ENCODE measurements at regions of chr3 and their contacts with region 1.

Region 1: GRCh38 chr3:21752749-21753347 is 1.8 kb upstream of the ZNF385D start:
- DNase-seq: peak; percentile 77
- ATAC-seq: peak; percentile 29
- H3K4me3 ChIP-seq: no peak overlapping the region; the same call in 1 of the 2 replicates
- H3K27ac ChIP-seq: peak overlapping the region; percentile 65; the same call in 1 of the 2 replicates
- H3K4me1 ChIP-seq: peaks cover 33% of the 10 kb centered on the region
- H3K27me3 ChIP-seq: no peaks in the 10 kb centered on the region
- CTCF ChIP-seq: peak; percentile 90

Region 2: GRCh38 chr3:21158861-21159542 is 593.8 kb before region 1 on chr3:
- CTCF ChIA-PET with region 1: no interaction called
- POLR2A ChIA-PET with region 1: no interaction called
- intact Hi-C with region 1: loop called (anchors 10 kb)
- DNase-seq: peak; percentile 8
- ATAC-seq: 0 out of 2 replicates have a peak, but pooled peaks have one; percentile 38
- H3K4me3 ChIP-seq: no peak overlapping the region
- H3K27ac ChIP-seq: no peak overlapping the region
- H3K4me1 ChIP-seq: no peaks in the 10 kb centered on the region
- H3K27me3 ChIP-seq: no peaks in the 10 kb centered on the region
- CTCF ChIP-seq: no peak

Region 3: GRCh38 chr3:21484057-21484827 is 268.6 kb before region 1 on chr3:
- CTCF ChIA-PET with region 1: interaction called, 9 read pairs
- POLR2A ChIA-PET with region 1: no interaction called
- intact Hi-C with region 1: loop called (anchors 2 kb)
- DNase-seq: peak; percentile 81
- ATAC-seq: peak; percentile 83
- H3K4me3 ChIP-seq: no peak overlapping the region
- H3K27ac ChIP-seq: no peak overlapping the region
- H3K4me1 ChIP-seq: peaks cover 9% of the 10 kb centered on the region
- H3K27me3 ChIP-seq: no peaks in the 10 kb centered on the region
- CTCF ChIP-seq: peak; percentile 86

Region 4: DNA sequence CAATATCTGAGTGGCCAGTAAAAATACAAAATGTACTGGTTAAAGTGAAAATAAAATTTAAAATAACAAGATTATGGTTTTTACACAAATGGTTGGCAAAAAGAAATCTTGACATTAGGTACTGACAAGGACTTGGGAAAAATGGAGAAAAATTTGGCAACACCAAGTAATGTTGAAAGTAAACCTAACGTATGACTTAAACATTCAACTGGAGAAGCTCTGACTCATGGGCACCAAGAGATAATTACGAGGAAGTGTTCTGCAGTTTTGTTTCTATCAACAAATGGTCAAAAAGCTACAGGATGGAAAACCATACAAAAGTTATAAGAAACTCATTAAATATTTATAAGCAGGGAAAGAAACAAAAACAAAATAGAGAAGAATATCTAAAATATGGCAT is 179.6 kb before region 1 on chr3:
- CTCF ChIA-PET with region 1: no interaction called
- POLR2A ChIA-PET with region 1: no interaction called
- intact Hi-C with region 1: loop called (anchors 2 kb)
- DNase-seq: peak; percentile 18
- ATAC-seq: no peak
- H3K4me3 ChIP-seq: no peak overlapping the region
- H3K27ac ChIP-seq: no peak overlapping the region
- H3K4me1 ChIP-seq: peaks cover 15% of the 10 kb centered on the region; the same call in 1 of the 2 replicates
- H3K27me3 ChIP-seq: no peaks in the 10 kb centered on the region
- CTCF ChIP-seq: no peak

Region 5: GRCh38 chr3:21672303-21672702 is 80.5 kb before region 1 on chr3:
- CTCF ChIA-PET with region 1: interaction called, 8 read pairs
- POLR2A ChIA-PET with region 1: interaction called, 8 read pairs
- intact Hi-C with region 1: loop called (anchors 1 kb)
- DNase-seq: peak; percentile 94
- ATAC-seq: peak; percentile 83
- H3K4me3 ChIP-seq: peak overlapping the region; percentile 29; the same call in 1 of the 2 replicates
- H3K27ac ChIP-seq: peak overlapping the region; percentile 98
- H3K4me1 ChIP-seq: peaks cover 59% of the 10 kb centered on the region
- H3K27me3 ChIP-seq: no peaks in the 10 kb centered on the region
- CTCF ChIP-seq: no peak

Region 6: DNA sequence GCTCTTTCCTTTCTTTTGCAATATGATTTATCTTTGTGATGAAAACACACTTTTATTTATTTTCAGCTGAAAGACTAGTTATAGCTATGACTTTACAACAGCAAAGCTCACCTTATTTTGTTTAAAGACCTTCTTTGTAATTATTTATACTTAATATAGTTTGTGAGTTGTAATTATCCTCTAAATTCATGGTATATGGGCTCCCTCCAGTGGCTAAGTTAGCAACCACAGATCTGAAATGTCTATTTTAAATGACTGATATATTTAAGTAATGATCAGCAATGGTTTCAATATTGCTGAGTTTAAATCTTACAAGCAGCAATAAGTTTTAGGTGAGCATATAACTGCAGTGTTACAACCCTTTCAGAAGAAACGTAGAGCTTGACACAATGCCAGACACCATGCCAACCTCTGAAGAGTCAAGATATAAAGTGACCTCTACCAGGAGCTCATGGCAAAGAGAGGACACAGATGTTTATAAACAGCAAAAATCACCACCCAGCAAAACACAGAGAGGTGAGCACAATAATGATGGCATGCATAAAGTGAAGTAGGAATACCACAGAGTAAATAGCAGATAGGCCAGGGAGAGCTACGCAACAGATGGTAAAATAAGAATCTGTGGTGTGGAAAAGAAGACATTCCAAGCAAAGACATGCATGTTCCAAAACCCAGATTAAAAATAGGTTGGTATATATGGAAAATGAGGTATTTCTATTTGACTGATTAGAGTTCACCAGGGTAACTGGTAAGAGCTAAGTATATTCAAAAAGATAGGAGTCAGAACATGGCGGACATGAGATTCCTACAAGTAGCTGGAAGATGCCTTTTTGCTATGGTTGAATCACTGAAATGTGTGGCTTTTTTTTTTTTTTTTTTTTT is 141.9 kb after region 1 on chr3:
- CTCF ChIA-PET with region 1: interaction called, 27 read pairs
- POLR2A ChIA-PET with region 1: no interaction called
- intact Hi-C with region 1: loop called (anchors 1 kb)
- DNase-seq: peak; percentile 66
- ATAC-seq: no peak
- H3K4me3 ChIP-seq: no peak overlapping the region
- H3K27ac ChIP-seq: no peak overlapping the region
- H3K4me1 ChIP-seq: peaks cover 13% of the 10 kb centered on the region; the same call in 1 of the 2 replicates
- H3K27me3 ChIP-seq: no peaks in the 10 kb centered on the region
- CTCF ChIP-seq: peak; percentile 87

Region 7: GRCh38 chr3:21954709-21955108 is 201.9 kb after region 1 on chr3:
- CTCF ChIA-PET with region 1: no interaction called
- POLR2A ChIA-PET with region 1: no interaction called
- intact Hi-C with region 1: no loop called
- DNase-seq: peak; percentile 61
- ATAC-seq: peak; percentile 66
- H3K4me3 ChIP-seq: no peak overlapping the region
- H3K27ac ChIP-seq: no peak overlapping the region
- H3K4me1 ChIP-seq: peaks cover 11% of the 10 kb centered on the region; the same call in 1 of the 2 replicates
- H3K27me3 ChIP-seq: no peaks in the 10 kb centered on the region
- CTCF ChIP-seq: no peak

Region 8: DNA sequence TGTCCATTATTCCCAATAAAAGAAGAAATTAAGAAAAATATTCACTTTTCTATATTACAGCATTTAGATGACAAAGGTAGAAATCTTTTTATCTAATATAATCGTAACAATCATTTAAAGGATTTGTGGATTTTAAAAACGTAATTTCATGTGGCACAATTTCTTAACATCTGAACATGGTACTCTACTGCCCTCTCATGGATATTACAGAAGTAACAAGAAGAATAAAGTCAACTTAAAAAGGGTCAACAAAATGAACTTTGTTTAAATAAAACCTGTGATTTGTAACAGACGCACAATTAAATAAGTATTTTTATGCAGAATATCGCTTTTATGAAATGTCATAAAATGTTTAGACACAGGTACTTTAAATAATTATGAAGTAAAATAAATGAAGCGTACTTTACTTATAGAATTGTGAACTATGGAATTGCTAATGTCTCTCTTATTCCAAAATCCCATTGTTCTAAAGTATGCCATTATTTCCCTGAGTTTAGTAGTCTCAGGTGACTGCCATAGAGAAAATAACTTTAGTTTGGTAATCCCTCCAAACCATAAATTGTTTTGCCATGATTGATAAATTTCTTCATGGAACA is 365.0 kb after region 1 on chr3:
- CTCF ChIA-PET with region 1: no interaction called
- POLR2A ChIA-PET with region 1: interaction called, 7 read pairs
- intact Hi-C with region 1: loop called (anchors 1 kb)
- DNase-seq: peak; percentile 72
- ATAC-seq: no peak
- H3K4me3 ChIP-seq: no peak overlapping the region
- H3K27ac ChIP-seq: no peak overlapping the region
- H3K4me1 ChIP-seq: peaks cover 37% of the 10 kb centered on the region
- H3K27me3 ChIP-seq: no peaks in the 10 kb centered on the region
- CTCF ChIP-seq: peak; percentile 88